ENCODE measurements at regions of chr10 and their contacts with region 1.

Region 1: GRCh38 chr10:33008499-33009243 is 50.6 kb upstream of the ITGB1 start:
- DNase-seq: peak; percentile 13 to 23
- ATAC-seq: peak; percentile 49 to 57
- H3K4me3 ChIP-seq: no peak overlapping the region
- H3K27ac ChIP-seq: no peak overlapping the region
- H3K4me1 ChIP-seq: no peaks in the 10 kb centered on the region
- H3K27me3 ChIP-seq: no peaks in the 10 kb centered on the region
- CTCF ChIP-seq: peak; percentile 90 to 100 (median 97)
- POLR2A ChIP-seq: no peak

Region 2: DNA sequence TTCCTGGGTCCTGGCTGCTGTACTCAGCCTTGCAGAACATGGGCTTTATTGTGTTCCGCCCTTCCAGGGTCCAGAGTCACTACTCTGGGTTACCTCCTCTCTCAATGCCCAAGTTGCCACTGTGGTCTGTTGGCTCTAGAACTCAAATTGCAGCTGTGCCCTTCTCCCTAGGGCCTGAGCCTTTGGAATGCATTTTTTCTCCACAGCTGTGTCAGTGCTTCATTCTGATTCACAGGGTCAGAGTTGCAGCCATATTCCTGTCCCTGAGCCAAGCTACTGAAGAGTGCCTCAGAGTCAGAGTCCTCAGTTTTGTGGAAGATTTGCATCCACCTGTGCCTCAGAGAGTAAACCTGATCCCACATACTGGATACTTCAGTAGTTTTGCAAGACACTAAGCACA is 218.2 kb before region 1 on chr10:
- in situ Hi-C with region 1: loop called (anchors 5 kb)
- intact Hi-C with region 1: loop called (anchors 1 kb)
- DNase-seq: no peak
- ATAC-seq: no peak
- H3K4me3 ChIP-seq: no peak overlapping the region
- H3K27ac ChIP-seq: no peak overlapping the region
- H3K4me1 ChIP-seq: no peaks in the 10 kb centered on the region
- H3K27me3 ChIP-seq: no peaks in the 10 kb centered on the region
- CTCF ChIP-seq: no peak
- POLR2A ChIP-seq: no peak

Region 3: GRCh38 chr10:32795598-32796183 is 213.0 kb before region 1 on chr10:
- in situ Hi-C with region 1: loop called (anchors 5 kb)
- intact Hi-C with region 1: loop called (anchors 1 kb)
- DNase-seq: no peak
- ATAC-seq: no peak
- H3K4me3 ChIP-seq: no peak overlapping the region
- H3K27ac ChIP-seq: no peak overlapping the region
- H3K4me1 ChIP-seq: no peaks in the 10 kb centered on the region
- H3K27me3 ChIP-seq: no peaks in the 10 kb centered on the region
- CTCF ChIP-seq: peak; percentile 35 to 67 (median 66)
- POLR2A ChIP-seq: no peak

Region 4: GRCh38 chr10:32891261-32891660 is 117.4 kb before region 1 on chr10:
- in situ Hi-C with region 1: no loop called
- intact Hi-C with region 1: no loop called
- DNase-seq: no peak
- ATAC-seq: no peak
- H3K4me3 ChIP-seq: no peak overlapping the region
- H3K27ac ChIP-seq: no peak overlapping the region
- H3K4me1 ChIP-seq: no peaks in the 10 kb centered on the region
- H3K27me3 ChIP-seq: no peaks in the 10 kb centered on the region
- CTCF ChIP-seq: no peak
- POLR2A ChIP-seq: no peak

Region 5: GRCh38 chr10:32938554-32939061 is 70.1 kb before region 1 on chr10:
- in situ Hi-C with region 1: no loop called
- intact Hi-C with region 1: loop called (anchors 5 kb)
- DNase-seq: peak in 1 of 2 donors; percentile 49
- ATAC-seq: peak; percentile 48 to 75
- H3K4me3 ChIP-seq: peak overlapping the region; percentile 22 to 42 (median 32)
- H3K27ac ChIP-seq: peak overlapping the region; percentile 66 to 82 (median 72)
- H3K4me1 ChIP-seq: peaks cover 58 to 59% of the 10 kb centered on the region in 2 donors
- H3K27me3 ChIP-seq: no peaks in the 10 kb centered on the region
- CTCF ChIP-seq: no peak
- POLR2A ChIP-seq: no peak

Region 6: DNA sequence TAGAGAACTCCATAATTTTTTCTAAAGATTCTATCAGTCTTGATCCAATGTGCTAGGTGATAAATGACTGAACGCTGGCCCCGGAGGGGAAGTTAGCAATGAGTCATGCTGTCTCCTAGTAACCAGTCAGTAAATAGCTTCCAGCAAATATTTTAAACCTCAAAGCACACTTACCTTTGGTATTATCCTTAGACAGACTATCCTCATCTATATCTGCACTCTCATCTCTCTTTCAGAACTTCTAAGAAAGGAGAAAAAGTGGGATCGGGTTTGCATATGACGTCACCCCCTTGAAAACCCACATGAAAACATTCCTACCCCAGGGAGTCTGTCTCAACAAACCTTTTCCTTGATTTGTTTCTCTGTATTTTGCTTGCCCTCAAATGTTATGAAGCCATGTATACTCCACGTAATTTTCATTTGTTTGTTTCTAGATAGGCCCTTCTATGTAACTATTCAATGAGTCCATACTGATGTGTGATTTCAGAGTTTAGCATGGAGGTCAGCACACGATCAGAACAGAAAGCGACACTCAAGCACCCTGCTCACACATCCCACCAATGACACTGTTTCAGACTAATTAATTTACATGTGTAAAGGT is 500.7 kb after region 1 on chr10:
- in situ Hi-C with region 1: no loop called
- intact Hi-C with region 1: no loop called
- DNase-seq: peak in 1 of 2 donors; percentile 11
- ATAC-seq: no peak
- H3K4me3 ChIP-seq: no peak overlapping the region
- H3K27ac ChIP-seq: no peak overlapping the region
- H3K4me1 ChIP-seq: peaks cover 0 to 5% of the 10 kb centered on the region in 2 donors
- H3K27me3 ChIP-seq: no peaks in the 10 kb centered on the region
- CTCF ChIP-seq: no peak
- POLR2A ChIP-seq: no peak

Measured in gastrocnemius medialis (tissue), 4 donors.